ENCODE measurements at regions of chr6 and their contacts with region 1.

Region 1: GRCh38 chr6:29964887-29965562 is 22.7 kb downstream of the HLA-A start:
- DNase-seq: peak; percentile 47 to 89 (median 76)
- ATAC-seq: peak; percentile 91 to 96
- H3K4me3 Mint-ChIP-seq: peak overlapping the region; percentile 66 to 93 (median 84)
- H3K27ac Mint-ChIP-seq: peak overlapping the region; percentile 60 to 98 (median 93)
- H3K4me1 Mint-ChIP-seq: peaks cover 26 to 45% (median 42%) of the 10 kb centered on the region in 4 donors
- H3K27me3 Mint-ChIP-seq: no peaks in the 10 kb centered on the region

Region 2: GRCh38 chr6:29847871-29848630 is 117.0 kb before region 1 on chr6:
- POLR2A ChIA-PET with region 1: interaction called, 12 read pairs
- DNase-seq: peak; percentile 71 to 90 (median 84)
- ATAC-seq: peak; percentile 97 to 99
- H3K4me3 Mint-ChIP-seq: peak overlapping the region in 6 of 10 donors; percentile 22 to 67 (median 36)
- H3K27ac Mint-ChIP-seq: peak overlapping the region in 1 of 10 donors; percentile 4
- H3K4me1 Mint-ChIP-seq: peaks cover 8 to 24% (median 14%) of the 10 kb centered on the region in 4 donors
- H3K27me3 Mint-ChIP-seq: peaks cover 42 to 72% (median 49%) of the 10 kb centered on the region in 5 donors

Region 3: DNA sequence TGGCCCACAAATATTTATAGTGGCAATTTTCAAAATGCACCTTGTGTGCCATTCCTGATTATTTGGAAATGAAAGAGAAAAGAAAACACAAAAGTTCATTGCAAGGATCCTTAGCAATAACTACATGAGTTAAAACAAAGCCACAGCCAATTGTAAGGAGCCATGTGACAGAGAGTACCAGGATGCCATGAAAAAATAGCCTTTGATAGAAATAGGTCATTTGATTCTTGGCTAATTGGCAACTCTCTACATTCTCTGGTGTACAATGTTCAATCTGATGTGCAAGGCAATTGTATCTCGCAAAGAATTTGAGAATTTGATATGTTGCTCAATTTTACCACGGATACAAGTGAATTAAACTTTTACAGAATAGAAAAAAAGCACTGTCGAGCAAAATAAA is 13.1 kb before region 1 on chr6:
- POLR2A ChIA-PET with region 1: interaction called, 58 read pairs
- DNase-seq: no peak
- ATAC-seq: no peak
- H3K4me3 Mint-ChIP-seq: no peak overlapping the region
- H3K27ac Mint-ChIP-seq: peak overlapping the region in 2 of 10 donors; percentile 51 to 75
- H3K4me1 Mint-ChIP-seq: peaks cover 24 to 44% (median 37%) of the 10 kb centered on the region in 4 donors
- H3K27me3 Mint-ChIP-seq: no peaks in the 10 kb centered on the region

Region 4: GRCh38 chr6:29976588-29977424 is 11.8 kb after region 1 on chr6:
- POLR2A ChIA-PET with region 1: interaction called, 36 read pairs
- DNase-seq: peak; percentile 14 to 68 (median 41)
- ATAC-seq: peak; percentile 84 to 90
- H3K4me3 Mint-ChIP-seq: peak overlapping the region; percentile 84 to 95 (median 91)
- H3K27ac Mint-ChIP-seq: peak overlapping the region in 8 of 10 donors; percentile 37 to 88 (median 76)
- H3K4me1 Mint-ChIP-seq: peaks cover 31 to 48% (median 37%) of the 10 kb centered on the region in 4 donors
- H3K27me3 Mint-ChIP-seq: peaks cover 33 to 62% (median 46%) of the 10 kb centered on the region in 5 donors

Region 5: DNA sequence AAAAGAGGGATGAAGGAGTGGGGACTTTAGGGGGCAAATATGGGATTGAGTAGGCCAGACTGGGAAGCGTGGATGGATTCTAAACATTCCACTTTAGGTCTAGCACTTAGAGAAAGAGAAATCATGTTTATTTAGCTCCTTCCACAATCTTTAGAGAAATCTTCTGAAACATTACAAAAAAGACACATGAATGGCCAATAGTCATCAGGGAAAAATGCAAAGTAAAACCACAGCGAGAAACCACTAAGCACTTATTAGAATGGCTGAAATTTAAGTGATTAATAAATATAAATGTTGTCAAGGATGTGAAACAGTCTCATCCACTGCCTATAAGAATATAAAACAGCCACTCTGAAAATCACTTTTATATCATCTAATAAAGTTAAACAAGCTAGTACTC is 24.2 kb after region 1 on chr6:
- POLR2A ChIA-PET with region 1: no interaction called
- DNase-seq: no peak
- ATAC-seq: no peak
- H3K4me3 Mint-ChIP-seq: no peak overlapping the region
- H3K27ac Mint-ChIP-seq: no peak overlapping the region
- H3K4me1 Mint-ChIP-seq: no peaks in the 10 kb centered on the region
- H3K27me3 Mint-ChIP-seq: peaks cover 0 to 11% (median 2%) of the 10 kb centered on the region in 5 donors

Measured in naive thymus-derived CD8-positive, alpha-beta T cell (primary cell).